CD4-positive, alpha-beta T cell (primary cell): ENCODE measurements at regions of chr14 and their contacts with region 1.

Region 1: GRCh38 chr14:75542588-75543091 is 20.4 kb downstream of the BATF start:
- DNase-seq: peak; percentile 49 to 92 (median 71)
- ATAC-seq: peak; percentile 88
- H3K4me3 ChIP-seq: peak overlapping the region; percentile 28
- H3K4me3 Mint-ChIP-seq: peak overlapping the region; percentile 84
- H3K27ac ChIP-seq: peak overlapping the region; percentile 84 to 87
- H3K27ac Mint-ChIP-seq: peak overlapping the region; percentile 97
- H3K4me1 ChIP-seq: peaks cover 82% of the 10 kb centered on the region
- H3K4me1 Mint-ChIP-seq: peaks cover 65% of the 10 kb centered on the region
- H3K27me3 ChIP-seq: no peaks in the 10 kb centered on the region
- H3K27me3 Mint-ChIP-seq: no peaks in the 10 kb centered on the region
- CTCF ChIP-seq: no peak

Region 2: DNA sequence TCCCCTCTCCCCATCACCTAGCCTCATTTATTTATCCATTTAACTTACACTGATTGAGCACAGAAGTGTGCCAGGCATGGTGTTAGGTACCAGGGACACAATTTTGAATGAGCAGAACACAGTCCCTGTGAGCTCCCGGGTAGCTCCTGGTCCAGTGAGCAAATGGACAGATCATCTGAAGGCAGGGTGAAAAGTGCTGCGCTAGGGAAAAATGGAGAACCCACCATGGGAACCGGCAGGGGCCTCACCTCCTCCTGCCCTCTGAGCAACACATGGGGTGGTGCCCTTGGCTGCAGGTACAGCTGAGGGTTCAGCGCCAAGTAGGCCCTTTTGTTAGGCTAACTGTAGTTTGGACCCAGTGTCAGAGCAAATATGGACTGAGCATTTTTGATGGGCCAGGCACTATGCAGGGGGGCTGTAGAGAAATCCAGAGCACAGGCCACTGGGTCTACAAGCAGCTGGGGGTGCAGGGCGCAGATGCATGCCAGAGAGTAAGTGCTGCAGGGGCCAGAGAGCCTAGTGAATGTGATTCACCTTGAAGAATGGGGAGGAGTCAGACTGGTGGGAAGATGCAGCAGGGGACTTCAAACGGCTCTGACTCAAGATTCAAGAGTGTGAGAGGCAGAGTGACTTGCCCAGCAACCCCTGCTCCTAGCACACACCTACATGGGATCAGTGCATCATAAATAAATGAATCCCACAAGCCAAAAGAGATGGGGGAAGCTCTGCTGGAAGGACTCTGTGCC is 958.8 kb before region 1 on chr14:
- CTCF ChIA-PET with region 1: no interaction called
- POLR2A ChIA-PET with region 1: no interaction called
- intact Hi-C with region 1: no loop called
- DNase-seq: no peak
- ATAC-seq: no peak
- H3K4me3 ChIP-seq: no peak overlapping the region
- H3K4me3 Mint-ChIP-seq: no peak overlapping the region
- H3K27ac ChIP-seq: no peak overlapping the region
- H3K27ac Mint-ChIP-seq: no peak overlapping the region
- H3K4me1 ChIP-seq: peaks cover 9% of the 10 kb centered on the region
- H3K4me1 Mint-ChIP-seq: peaks cover 7% of the 10 kb centered on the region
- H3K27me3 ChIP-seq: no peaks in the 10 kb centered on the region
- H3K27me3 Mint-ChIP-seq: peaks cover 7% of the 10 kb centered on the region
- CTCF ChIP-seq: no peak

Region 3: GRCh38 chr14:75084513-75084912 is 458.1 kb before region 1 on chr14:
- CTCF ChIA-PET with region 1: no interaction called
- POLR2A ChIA-PET with region 1: no interaction called
- intact Hi-C with region 1: no loop called
- DNase-seq: no peak
- ATAC-seq: no peak
- H3K4me3 ChIP-seq: no peak overlapping the region
- H3K4me3 Mint-ChIP-seq: no peak overlapping the region
- H3K27ac ChIP-seq: no peak overlapping the region
- H3K27ac Mint-ChIP-seq: no peak overlapping the region
- H3K4me1 ChIP-seq: no peaks in the 10 kb centered on the region
- H3K4me1 Mint-ChIP-seq: no peaks in the 10 kb centered on the region
- H3K27me3 ChIP-seq: no peaks in the 10 kb centered on the region
- H3K27me3 Mint-ChIP-seq: no peaks in the 10 kb centered on the region
- CTCF ChIP-seq: no peak

Region 4: DNA sequence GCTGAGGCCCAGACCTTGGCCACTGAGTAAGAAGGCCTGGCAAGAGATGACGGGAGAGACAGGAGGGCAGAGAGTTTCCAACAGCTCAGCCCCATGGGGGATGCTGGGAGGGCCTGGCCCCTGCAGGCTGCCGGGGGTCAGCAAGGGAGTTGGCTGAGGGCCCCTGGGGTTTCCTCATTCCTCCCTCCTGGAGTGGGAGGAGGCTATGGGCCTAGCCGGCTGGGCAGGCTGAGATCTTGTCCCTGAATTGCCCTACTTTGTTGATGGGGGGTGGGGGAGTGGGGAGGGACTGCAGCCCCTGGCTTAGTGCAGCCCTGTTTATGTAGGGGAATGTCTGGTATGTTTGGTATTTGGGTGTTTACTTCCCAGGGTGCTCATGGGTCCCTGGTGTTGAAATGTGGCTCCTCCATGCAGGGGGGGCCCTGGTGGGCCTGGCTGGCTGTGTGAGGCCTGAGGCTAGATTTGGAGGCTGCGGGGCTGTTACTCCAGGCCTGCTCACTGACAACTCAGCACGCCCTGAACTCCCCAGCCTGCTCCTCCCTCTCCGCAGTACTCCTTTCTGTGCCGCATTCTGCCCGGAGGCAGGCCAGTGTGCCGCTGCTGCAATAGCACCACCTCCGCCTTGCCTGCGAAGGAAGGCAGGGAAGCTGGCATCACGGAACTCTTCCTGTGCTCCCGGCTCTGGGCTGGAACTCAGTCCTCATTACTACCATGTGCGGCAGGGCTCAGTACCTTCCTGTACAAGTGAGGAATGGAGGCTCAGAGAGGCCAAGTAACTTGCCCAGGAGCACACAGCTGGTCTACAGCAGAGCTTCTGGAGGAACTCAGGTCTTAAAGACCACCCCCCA is 89.5 kb before region 1 on chr14:
- CTCF ChIA-PET with region 1: no interaction called
- POLR2A ChIA-PET with region 1: no interaction called
- intact Hi-C with region 1: no loop called
- DNase-seq: no peak
- ATAC-seq: no peak
- H3K4me3 ChIP-seq: no peak overlapping the region
- H3K4me3 Mint-ChIP-seq: no peak overlapping the region
- H3K27ac ChIP-seq: no peak overlapping the region
- H3K27ac Mint-ChIP-seq: no peak overlapping the region
- H3K4me1 ChIP-seq: no peaks in the 10 kb centered on the region
- H3K4me1 Mint-ChIP-seq: no peaks in the 10 kb centered on the region
- H3K27me3 ChIP-seq: no peaks in the 10 kb centered on the region
- H3K27me3 Mint-ChIP-seq: no peaks in the 10 kb centered on the region
- CTCF ChIP-seq: no peak

Region 5: GRCh38 chr14:75514673-75515628 is 27.7 kb before region 1 on chr14:
- CTCF ChIA-PET with region 1: interaction called, 4 read pairs
- POLR2A ChIA-PET with region 1: interaction called, 14 read pairs
- intact Hi-C with region 1: no loop called
- DNase-seq: peak; percentile 20 to 80 (median 41)
- ATAC-seq: peak; percentile 77
- H3K4me3 ChIP-seq: peak overlapping the region; percentile 54
- H3K4me3 Mint-ChIP-seq: peak overlapping the region; percentile 89
- H3K27ac ChIP-seq: peak overlapping the region; percentile 29 to 67
- H3K27ac Mint-ChIP-seq: peak overlapping the region; percentile 72
- H3K4me1 ChIP-seq: peaks cover 38% of the 10 kb centered on the region
- H3K4me1 Mint-ChIP-seq: peaks cover 49% of the 10 kb centered on the region
- H3K27me3 ChIP-seq: no peaks in the 10 kb centered on the region
- H3K27me3 Mint-ChIP-seq: no peaks in the 10 kb centered on the region
- CTCF ChIP-seq: no peak

Region 6: GRCh38 chr14:75522224-75522982 is 20.2 kb before region 1 on chr14 and contains the start of gene BATF:
- CTCF ChIA-PET with region 1: interaction called, 10 read pairs
- POLR2A ChIA-PET with region 1: interaction called, 49 read pairs
- intact Hi-C with region 1: loop called (anchors 1 to 2 kb)
- DNase-seq: peak; percentile 57 to 91 (median 69)
- ATAC-seq: peak; percentile 80
- H3K4me3 ChIP-seq: peak within 1 kb of the TSS; percentile 67
- H3K4me3 Mint-ChIP-seq: peak within 1 kb of the TSS; percentile 100
- H3K27ac ChIP-seq: peak within 1 kb of the TSS; percentile 76 to 87
- H3K27ac Mint-ChIP-seq: peak within 1 kb of the TSS; percentile 96
- H3K4me1 ChIP-seq: peaks cover 69% of the 10 kb centered on the region
- H3K4me1 Mint-ChIP-seq: peaks cover 81% of the 10 kb centered on the region
- H3K27me3 ChIP-seq: no peaks in the 10 kb centered on the region
- H3K27me3 Mint-ChIP-seq: no peaks in the 10 kb centered on the region
- CTCF ChIP-seq: no peak
- total RNA-seq, gene BATF: 6.7 to 7.8 TPM

Region 7: GRCh38 chr14:75527449-75528163 is 15.0 kb before region 1 on chr14:
- CTCF ChIA-PET with region 1: interaction called, 10 read pairs
- POLR2A ChIA-PET with region 1: interaction called, 49 read pairs
- intact Hi-C with region 1: loop called (anchors 1 to 2 kb)
- DNase-seq: no peak
- ATAC-seq: peak; percentile 27
- H3K4me3 ChIP-seq: no peak overlapping the region
- H3K4me3 Mint-ChIP-seq: peak overlapping the region; percentile 62
- H3K27ac ChIP-seq: no peak overlapping the region
- H3K27ac Mint-ChIP-seq: peak overlapping the region; percentile 96
- H3K4me1 ChIP-seq: peaks cover 59% of the 10 kb centered on the region
- H3K4me1 Mint-ChIP-seq: peaks cover 82% of the 10 kb centered on the region
- H3K27me3 ChIP-seq: no peaks in the 10 kb centered on the region
- H3K27me3 Mint-ChIP-seq: no peaks in the 10 kb centered on the region
- CTCF ChIP-seq: no peak